ENCODE measurements at regions of chr5 and their contacts with region 1.

Region 1: DNA sequence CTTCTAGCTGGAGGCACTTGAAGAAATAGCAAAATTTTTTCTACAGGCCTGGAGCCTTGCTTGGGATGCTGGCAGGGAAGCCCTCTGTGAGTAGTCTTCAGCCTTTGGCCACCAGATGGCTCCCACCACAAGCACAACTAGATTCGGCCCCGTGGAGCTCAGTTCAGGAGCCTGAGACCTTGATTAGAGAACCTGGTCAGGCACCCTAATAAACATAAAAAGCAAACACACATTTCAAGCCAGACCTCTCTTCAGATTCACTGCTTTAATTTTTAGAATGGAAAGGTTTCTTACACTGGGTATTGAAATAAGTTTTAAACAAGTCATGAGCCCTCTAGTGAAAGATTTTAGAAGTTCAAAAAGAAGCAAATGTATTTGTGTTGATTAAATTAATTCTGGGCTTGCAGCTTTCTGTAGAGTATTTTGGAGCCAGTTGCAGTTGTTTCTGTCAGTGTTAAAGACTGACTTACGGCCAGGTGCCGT is 41.4 kb downstream of the GLRX start:
- DNase-seq: peak; percentile 74
- CTCF ChIP-seq: peak; percentile 82

Region 2: DNA sequence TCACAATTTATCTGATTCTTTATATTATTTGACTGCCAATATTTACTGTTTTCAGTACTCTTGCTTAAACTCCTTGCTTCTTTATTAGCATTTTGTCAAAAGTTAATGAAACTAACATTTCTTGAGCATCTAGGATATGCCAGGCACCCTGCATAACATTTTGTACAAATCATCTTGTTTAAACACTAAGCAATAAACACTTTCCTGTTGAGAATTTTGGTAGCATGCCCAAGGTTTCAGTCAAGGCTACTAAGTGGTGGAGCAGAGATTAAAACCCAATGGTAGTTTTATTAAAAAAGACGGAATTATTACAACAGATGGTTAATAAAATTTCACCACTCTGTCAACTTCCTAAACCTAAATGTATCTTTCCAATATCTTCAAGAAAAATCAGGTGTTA is 269.5 kb before region 1 on chr5:
- CTCF ChIA-PET with region 1: no interaction called
- POLR2A ChIA-PET with region 1: no interaction called
- DNase-seq: no peak
- CTCF ChIP-seq: no peak

Region 3: GRCh38 chr5:95646554-95647431 is 134.3 kb before region 1 on chr5 and contains the start of gene RFESD:
- CTCF ChIA-PET with region 1: interaction called, 24 read pairs
- POLR2A ChIA-PET with region 1: no interaction called
- DNase-seq: peak; percentile 93
- CTCF ChIP-seq: no peak

Region 4: GRCh38 chr5:95741458-95741857 is 39.7 kb before region 1 on chr5:
- CTCF ChIA-PET with region 1: no interaction called
- POLR2A ChIA-PET with region 1: no interaction called
- DNase-seq: no peak
- CTCF ChIP-seq: no peak

Region 5: DNA sequence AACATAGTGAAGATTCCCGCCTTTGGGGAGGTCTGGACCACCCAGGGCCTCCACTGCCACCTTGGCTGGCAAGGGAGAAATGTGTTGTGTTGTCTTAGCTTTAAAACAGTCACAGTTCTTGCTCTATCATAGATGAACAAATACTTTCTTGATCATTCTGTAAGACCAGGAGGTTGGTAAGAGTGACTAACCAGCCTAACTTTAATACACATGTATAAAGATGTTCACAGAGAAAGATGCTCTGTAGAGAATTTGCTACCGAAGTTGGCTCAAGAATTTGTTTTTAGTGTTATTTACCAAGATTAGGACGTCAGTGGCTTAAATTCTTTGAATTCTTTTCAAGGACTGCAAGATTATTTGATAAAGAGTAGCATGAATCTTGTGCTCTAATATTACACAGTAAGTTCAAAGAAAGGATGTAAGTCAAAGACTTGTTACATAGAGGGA is 13.0 kb after region 1 on chr5:
- CTCF ChIA-PET with region 1: interaction called, 50 read pairs
- POLR2A ChIA-PET with region 1: no interaction called
- DNase-seq: no peak
- CTCF ChIP-seq: no peak

Region 6: GRCh38 chr5:95816776-95817175 is 35.6 kb after region 1 on chr5:
- CTCF ChIA-PET with region 1: interaction called, 23 read pairs
- POLR2A ChIA-PET with region 1: no interaction called
- DNase-seq: no peak
- CTCF ChIP-seq: no peak

Region 7: DNA sequence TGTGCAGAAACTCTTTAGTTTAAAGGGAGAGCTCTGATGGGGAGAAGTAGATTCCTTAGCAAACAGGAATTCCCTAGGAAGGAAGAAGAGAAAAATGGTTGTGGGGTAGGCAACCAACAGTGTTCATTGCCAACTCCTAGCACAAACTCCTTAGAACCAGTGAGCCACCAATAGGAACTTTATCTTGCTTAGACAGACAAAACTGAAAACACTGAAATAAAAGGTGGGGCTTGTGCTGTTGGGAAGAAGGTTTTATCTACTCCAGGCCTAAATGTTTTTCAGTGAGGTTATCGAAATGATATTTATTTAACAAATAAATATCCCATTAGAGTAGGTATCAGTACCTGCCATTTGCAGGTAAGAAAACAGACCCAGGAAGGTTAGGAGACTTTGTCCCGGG is 49.1 kb after region 1 on chr5:
- CTCF ChIA-PET with region 1: interaction called, 561 read pairs
- POLR2A ChIA-PET with region 1: no interaction called
- DNase-seq: no peak
- CTCF ChIP-seq: no peak